ENCODE measurements at regions of chr2 and their contacts with region 1.

Region 1: GRCh38 chr2:1546023-1546591 is 132.8 kb downstream of the TPO start:
- DNase-seq: no peak
- H3K4me3 ChIP-seq: no peak overlapping the region
- H3K27ac ChIP-seq: no peak overlapping the region
- H3K4me1 ChIP-seq: no peaks in the 10 kb centered on the region
- H3K27me3 ChIP-seq: no peaks in the 10 kb centered on the region
- CTCF ChIP-seq: peak; percentile 72

Region 2: DNA sequence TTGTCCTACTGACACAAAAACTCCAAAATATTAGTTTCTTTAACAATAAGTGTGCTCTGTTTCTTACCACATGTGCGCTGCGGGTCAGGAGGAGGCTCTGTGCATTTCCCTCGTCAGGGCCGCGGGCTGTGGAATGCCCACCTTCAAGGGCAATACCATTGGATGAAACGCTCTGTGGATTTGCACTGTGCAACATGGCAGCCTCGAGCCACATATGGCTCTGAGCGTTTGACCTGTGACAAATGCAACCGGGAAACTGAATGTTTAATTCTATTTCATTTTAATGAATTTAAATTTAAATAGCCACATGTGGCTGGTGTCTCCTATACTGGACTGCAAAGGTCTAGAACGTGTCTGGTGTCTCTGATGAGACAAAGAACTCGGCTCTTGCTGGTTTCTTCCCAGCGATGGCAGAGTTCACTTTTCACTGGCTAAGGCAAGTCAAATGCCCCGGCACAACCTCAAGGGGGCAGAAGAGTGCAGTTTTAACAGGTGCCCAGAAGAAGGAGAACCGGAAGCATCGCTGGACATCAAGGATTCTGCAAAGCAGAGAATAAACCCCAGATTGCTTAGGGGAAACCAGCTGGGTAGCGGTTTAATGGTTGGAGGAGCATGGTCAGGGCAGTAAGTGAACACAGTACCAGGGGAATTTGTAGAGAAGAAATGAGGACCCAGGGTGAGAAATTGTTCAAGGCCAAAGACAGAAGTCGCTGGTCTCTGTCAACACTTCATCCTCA is 831.9 kb before region 1 on chr2:
- intact Hi-C with region 1: loop called (anchors 5 kb)
- DNase-seq: peak; percentile 63
- H3K4me3 ChIP-seq: no peak overlapping the region
- H3K27ac ChIP-seq: no peak overlapping the region
- H3K4me1 ChIP-seq: no peaks in the 10 kb centered on the region
- H3K27me3 ChIP-seq: no peaks in the 10 kb centered on the region
- CTCF ChIP-seq: peak; percentile 66

Region 3: GRCh38 chr2:854460-854859 is 691.6 kb before region 1 on chr2:
- intact Hi-C with region 1: loop called (anchors 2 kb)
- DNase-seq: peak; percentile 64
- H3K4me3 ChIP-seq: no peak overlapping the region
- H3K27ac ChIP-seq: no peak overlapping the region
- H3K4me1 ChIP-seq: no peaks in the 10 kb centered on the region
- H3K27me3 ChIP-seq: no peaks in the 10 kb centered on the region
- CTCF ChIP-seq: peak; percentile 36

Region 4: GRCh38 chr2:950080-950966 is 595.8 kb before region 1 on chr2 and contains the start of gene SNTG2:
- intact Hi-C with region 1: loop called (anchors 10 kb)
- DNase-seq: peak; percentile 41
- H3K4me3 ChIP-seq: peak within 1 kb of the TSS; percentile 45
- H3K27ac ChIP-seq: no peak within 1 kb of the TSS
- H3K4me1 ChIP-seq: no peaks in the 10 kb centered on the region
- H3K27me3 ChIP-seq: peaks cover 31% of the 10 kb centered on the region
- CTCF ChIP-seq: no peak
- total RNA-seq, gene SNTG2: 0.72 to 1.0 TPM